Activated naive CD4-positive, alpha-beta T cell treated with anti-CD3 and anti-CD28 coated beads for 36 hours (primary cell): ENCODE measurements at regions of chr9 and their contacts with region 1.

Region 1: GRCh38 chr9:34989003-34989945 is at the start of gene DNAJB5:
- DNase-seq: peak; percentile 99
- H3K4me3 Mint-ChIP-seq: peak within 1 kb of the TSS; percentile 90
- H3K27ac Mint-ChIP-seq: peak within 1 kb of the TSS; percentile 92
- H3K4me1 Mint-ChIP-seq: peaks cover 85% of the 10 kb centered on the region
- H3K27me3 Mint-ChIP-seq: no peaks in the 10 kb centered on the region
- total RNA-seq, gene DNAJB5: 11.4 to 12.0 TPM

Region 2: DNA sequence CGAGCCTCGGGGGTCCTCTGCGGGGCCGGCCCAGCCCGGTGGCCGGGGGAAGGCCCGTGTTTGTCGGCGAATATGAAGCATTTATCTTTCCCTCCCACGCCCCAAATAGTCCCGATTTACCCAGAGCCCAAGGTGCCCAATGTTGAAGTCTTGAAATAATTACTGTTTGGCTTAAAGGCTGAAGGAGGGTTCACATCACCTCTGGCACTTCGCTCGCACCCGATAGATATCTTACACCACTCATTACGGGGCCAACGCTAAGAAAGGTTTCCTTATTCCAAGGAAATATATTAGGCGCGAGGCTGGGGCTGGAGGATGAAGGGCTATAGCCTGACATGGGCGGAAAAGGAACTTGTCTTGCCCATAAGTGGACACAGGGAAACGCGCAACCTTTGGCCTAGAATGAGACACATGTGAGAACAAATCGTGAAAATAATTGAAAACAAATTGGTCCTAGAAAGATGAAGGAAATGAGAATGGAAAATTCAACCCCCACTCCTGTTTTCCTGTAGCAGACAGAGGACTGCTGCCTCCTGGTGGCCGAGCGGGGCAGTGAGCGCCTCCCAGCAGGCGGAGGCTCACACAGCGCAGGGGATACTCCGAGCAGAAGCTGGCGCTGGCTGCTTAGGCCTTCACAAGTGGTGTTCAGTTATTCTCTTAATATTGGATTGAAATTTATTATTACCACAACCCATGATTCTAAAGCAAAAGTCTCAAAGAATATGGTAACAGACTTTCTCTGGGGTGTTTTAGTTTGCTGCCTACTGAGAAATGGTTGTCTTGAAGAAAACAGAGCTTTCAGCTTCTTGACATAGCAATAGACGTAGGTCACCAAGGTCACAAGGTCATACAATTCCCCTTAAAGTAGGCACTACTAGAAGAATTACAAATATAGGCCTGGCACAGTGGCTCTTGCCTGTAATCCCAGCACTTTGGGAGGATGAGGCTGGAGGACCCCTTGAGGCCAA is 287.2 kb before region 1 on chr9:
- CTCF ChIA-PET with region 1: interaction called, 4 read pairs
- intact Hi-C with region 1: loop called (anchors 5 kb)
- DNase-seq: peak; percentile 90
- H3K4me3 Mint-ChIP-seq: peak overlapping the region; percentile 69
- H3K27ac Mint-ChIP-seq: no peak overlapping the region
- H3K4me1 Mint-ChIP-seq: peaks cover 7% of the 10 kb centered on the region
- H3K27me3 Mint-ChIP-seq: peaks cover 5% of the 10 kb centered on the region

Region 3: DNA sequence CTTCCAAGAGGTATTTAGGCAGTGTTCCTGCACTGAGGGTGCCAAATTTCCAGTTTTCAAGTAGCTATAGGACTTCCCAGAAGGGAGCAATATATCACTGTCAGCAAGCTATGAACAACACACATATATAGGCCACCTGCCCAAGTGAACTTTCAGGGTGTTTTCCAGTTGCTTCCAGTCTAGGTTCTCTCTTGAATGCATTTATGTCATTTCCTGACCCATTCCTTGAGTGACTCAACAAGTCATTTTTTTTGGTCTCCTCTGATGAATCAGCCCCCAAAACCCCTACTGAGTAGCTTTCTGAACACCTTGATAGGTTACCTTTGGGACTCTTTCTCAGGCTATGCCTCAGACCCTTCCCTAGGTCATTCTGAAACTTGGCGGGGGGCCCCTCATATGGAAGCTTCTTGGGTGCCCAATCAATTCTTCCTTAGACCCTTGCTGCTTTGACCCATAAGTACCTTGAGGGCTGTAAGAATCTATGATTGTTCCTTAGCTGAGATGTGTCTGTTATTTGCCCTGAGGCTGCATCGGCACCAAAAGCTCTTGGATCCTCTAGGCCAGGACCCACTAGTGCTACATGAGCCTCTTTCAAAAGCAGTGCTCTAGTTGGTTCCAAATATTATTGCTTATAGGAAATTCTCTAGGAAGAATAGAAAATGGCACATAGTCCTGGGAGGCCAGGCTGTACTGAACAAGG is 12.7 kb after region 1 on chr9:
- CTCF ChIA-PET with region 1: interaction called, 11 read pairs
- intact Hi-C with region 1: loop called (anchors 1 kb)
- DNase-seq: peak; percentile 70
- H3K4me3 Mint-ChIP-seq: no peak overlapping the region
- H3K27ac Mint-ChIP-seq: peak overlapping the region; percentile 83
- H3K4me1 Mint-ChIP-seq: peaks cover 35% of the 10 kb centered on the region
- H3K27me3 Mint-ChIP-seq: no peaks in the 10 kb centered on the region

Region 4: DNA sequence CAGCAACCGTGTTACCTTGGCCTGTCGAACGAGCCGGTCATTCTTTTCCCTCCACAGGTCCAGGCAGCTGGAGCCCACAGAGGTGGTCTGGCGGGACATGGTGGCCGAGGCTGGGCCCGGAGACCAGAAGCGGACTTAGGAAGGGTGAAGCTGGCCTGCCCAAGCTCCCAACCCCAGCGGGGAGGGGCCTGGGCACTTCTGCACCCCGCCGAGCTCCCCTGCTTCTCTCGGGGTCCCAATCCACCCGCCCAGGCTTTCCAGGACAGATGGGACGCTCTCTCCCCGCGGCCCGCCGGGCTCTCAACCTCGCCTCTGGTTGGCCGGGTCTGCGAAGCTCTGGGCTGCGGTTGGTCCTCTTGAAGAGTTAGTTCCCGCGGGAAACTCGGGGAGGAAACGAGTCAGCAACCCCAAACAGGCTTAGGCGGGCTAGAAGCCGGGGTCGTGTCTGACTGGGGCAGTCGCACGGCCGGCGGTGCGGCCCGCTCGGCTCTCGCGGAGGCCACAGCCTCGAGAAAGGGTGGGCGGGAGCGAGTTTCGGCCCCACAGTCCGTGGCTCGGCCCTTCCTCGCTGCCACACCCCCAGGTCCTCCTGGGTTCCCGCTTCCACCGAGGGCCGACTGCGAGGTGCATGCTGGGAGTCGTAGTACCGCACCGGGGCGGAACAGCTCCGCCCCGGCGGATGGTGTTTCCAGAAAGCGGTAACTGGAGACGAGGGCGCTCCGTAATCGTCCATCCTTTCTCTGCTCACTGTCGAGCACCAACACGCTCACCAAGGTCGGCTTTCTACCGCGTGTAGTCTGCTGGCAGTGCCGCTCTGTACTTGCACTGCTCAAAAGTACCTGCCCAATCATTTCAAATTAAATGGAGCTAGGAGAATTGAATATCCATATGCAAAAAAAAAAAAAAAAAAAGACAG is 90.4 kb after region 1 on chr9 and contains the start of gene FANCG:
- CTCF ChIA-PET with region 1: no interaction called
- intact Hi-C with region 1: loop called (anchors 1 kb)
- DNase-seq: peak; percentile 92
- H3K4me3 Mint-ChIP-seq: peak within 1 kb of the TSS; percentile 94
- H3K27ac Mint-ChIP-seq: peak within 1 kb of the TSS; percentile 98
- H3K4me1 Mint-ChIP-seq: peaks cover 19% of the 10 kb centered on the region
- H3K27me3 Mint-ChIP-seq: no peaks in the 10 kb centered on the region
- total RNA-seq, gene FANCG: 109 to 118 TPM

Region 5: DNA sequence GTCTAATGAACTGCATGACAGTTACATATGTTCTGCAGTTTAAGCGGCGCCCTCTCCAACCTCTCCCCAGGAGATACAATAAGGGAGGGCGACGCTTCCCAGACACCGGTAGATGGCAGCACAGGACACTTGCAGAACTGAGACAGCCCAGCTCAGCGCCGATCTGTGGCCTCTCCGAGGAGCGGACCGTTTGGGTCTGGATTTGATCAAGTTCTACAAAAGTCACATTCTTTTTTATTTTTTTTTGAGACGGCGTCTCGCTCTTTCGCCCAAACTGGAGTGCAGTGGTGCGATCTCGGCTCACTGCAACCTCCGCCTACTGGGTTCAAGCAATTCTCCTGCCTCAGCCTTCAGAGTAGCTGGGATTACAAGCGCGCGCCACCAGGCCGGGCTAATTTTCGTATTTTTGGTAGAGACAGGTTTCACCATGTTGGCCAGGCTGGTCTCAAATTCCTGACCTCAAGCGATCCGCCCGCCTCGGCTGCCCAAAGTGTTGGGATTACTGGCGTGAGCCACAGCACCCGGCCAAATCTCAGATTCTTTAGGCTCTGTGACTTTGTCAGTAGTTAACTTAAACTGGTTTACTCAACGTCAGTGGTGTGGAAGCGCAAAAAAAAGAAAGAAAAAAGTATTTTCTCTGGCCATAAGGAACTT is 127.8 kb after region 1 on chr9:
- CTCF ChIA-PET with region 1: no interaction called
- intact Hi-C with region 1: loop called (anchors 1 kb)
- DNase-seq: peak; percentile 94
- H3K4me3 Mint-ChIP-seq: peak overlapping the region; percentile 89
- H3K27ac Mint-ChIP-seq: peak overlapping the region; percentile 80
- H3K4me1 Mint-ChIP-seq: peaks cover 38% of the 10 kb centered on the region
- H3K27me3 Mint-ChIP-seq: no peaks in the 10 kb centered on the region

Region 6: DNA sequence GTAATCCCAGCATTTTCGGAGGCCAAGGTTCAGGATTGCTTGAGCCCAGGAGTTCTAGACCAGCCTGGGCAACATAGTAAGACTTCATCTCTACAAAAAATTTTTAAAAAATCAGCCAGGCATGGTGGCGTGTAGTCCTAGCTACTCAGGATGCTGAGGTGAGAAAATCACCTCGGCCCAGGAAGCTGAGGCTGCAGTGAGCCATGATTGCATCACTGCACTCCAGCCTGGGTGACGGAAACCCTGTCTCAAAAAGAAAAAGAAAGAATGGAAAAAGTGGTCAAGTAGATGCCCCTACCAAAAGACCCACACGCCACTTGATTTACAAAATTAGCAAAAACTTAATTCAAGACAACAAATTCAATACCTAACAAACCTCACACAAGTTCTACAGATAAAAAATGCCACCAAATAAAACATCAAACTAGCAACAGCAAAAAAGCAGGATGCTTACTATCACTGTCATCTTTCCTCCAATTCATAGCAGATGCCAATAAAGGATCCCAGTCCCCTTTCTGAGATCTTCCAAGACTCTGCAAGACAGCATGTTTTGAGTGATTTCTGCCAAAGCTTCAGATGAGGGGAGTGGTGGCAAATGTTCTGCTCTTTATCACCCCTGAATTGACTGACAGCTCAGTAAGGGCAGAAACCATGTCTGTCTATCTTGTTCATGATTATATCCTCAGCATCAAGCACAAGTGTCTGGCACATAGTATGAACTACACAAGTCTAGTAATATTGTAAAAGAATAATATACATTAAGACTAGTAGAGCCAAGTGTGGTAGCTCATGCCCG is 581.6 kb after region 1 on chr9:
- CTCF ChIA-PET with region 1: no interaction called
- intact Hi-C with region 1: loop called (anchors 10 kb)
- DNase-seq: peak; percentile 72
- H3K4me3 Mint-ChIP-seq: peak overlapping the region; percentile 16
- H3K27ac Mint-ChIP-seq: peak overlapping the region; percentile 88
- H3K4me1 Mint-ChIP-seq: peaks cover 36% of the 10 kb centered on the region
- H3K27me3 Mint-ChIP-seq: no peaks in the 10 kb centered on the region